Activated T-helper 1 cell treated with anti-CD3 and anti-CD28 coated beads, Interleukin-12 subunit alpha, Interleukin-12 subunit beta, Interleukin-2, Interleukin-4 antibody, amounts not matched to agents 30 ng/mL and 10 ng/mL and 1 ng/mL, durations not matched to agents 14 hours and 24 hours and 36 hours (primary cell): ENCODE measurements at regions of chr1 and their contacts with region 1.

Region 1: DNA sequence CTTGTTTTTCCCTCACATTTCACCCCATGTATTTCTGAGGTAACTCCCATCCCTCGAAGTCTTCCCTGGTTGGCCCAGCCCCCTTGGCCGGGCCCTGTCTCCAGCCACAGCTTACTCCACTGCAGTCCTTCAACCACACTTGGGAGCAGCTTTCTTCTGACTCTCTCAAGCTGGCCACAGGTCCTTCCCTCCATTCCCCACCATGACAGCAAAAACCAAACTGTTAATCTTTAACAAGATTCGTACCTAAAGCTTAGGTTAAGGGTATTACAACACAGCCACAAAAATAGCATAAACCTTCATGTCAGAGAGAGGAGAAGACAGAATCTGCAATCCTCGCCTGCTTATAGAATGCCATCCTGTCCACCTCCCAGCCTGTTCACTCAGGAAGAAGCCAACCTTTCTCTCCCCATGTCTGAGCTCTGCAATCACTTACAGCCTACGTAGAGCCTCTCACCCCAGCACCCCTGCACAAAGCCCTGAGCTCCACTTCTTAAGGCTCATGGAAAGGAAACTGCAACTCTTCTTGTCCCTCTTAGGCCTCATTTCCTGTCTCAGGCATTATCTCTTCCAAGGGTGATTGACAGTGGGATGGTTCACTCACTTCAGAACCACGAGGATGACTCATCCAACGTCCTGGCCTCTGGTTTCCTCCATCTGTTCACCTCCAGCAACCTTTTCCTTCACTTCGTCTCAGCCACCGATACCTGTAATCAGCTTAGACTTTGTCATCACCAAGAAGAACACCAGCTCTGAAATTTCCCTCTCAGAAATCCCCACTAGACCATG is 72.8 kb downstream of the CD2 start:
- DNase-seq: peak; percentile 75
- H3K4me3 Mint-ChIP-seq: peak overlapping the region; percentile 70
- H3K27ac Mint-ChIP-seq: peak overlapping the region; percentile 95
- H3K4me1 Mint-ChIP-seq: peaks cover 74% of the 10 kb centered on the region
- H3K27me3 Mint-ChIP-seq: no peaks in the 10 kb centered on the region

Region 2: GRCh38 chr1:116737020-116737854 is 89.8 kb before region 1 on chr1:
- intact Hi-C with region 1: loop called (anchors 1 kb)
- DNase-seq: peak; percentile 70
- H3K4me3 Mint-ChIP-seq: peak overlapping the region; percentile 66
- H3K27ac Mint-ChIP-seq: peak overlapping the region; percentile 99
- H3K4me1 Mint-ChIP-seq: peaks cover 79% of the 10 kb centered on the region
- H3K27me3 Mint-ChIP-seq: no peaks in the 10 kb centered on the region

Region 3: DNA sequence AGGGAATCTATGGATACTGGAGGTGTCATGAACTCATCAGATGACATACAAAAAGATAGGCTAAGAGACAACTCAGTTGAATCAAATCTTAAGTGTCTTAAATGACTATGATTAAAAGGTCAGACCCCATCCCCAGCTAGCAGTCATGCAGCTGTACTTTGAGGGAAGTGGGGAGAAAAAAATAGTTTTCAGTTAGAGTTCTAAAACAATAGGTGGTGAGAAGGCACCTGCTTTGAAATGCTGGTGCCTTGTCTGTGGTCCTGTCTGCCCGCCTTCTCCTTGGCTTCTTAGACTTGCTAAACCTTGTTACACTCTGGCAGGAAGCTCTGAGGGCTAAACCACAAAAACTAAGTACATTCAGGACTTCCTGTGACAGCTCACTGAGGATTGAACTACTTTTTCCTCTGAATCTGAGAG is 57.4 kb before region 1 on chr1:
- intact Hi-C with region 1: loop called (anchors 1 kb)
- DNase-seq: peak; percentile 77
- H3K4me3 Mint-ChIP-seq: peak overlapping the region; percentile 84
- H3K27ac Mint-ChIP-seq: peak overlapping the region; percentile 100
- H3K4me1 Mint-ChIP-seq: peaks cover 90% of the 10 kb centered on the region
- H3K27me3 Mint-ChIP-seq: peaks cover under 1% of the 10 kb centered on the region

Region 4: GRCh38 chr1:116853670-116854402 is 26.8 kb after region 1 on chr1:
- intact Hi-C with region 1: loop called (anchors 1 kb)
- DNase-seq: no peak
- H3K4me3 Mint-ChIP-seq: no peak overlapping the region
- H3K27ac Mint-ChIP-seq: peak overlapping the region; percentile 53
- H3K4me1 Mint-ChIP-seq: peaks cover 34% of the 10 kb centered on the region
- H3K27me3 Mint-ChIP-seq: no peaks in the 10 kb centered on the region

Region 5: DNA sequence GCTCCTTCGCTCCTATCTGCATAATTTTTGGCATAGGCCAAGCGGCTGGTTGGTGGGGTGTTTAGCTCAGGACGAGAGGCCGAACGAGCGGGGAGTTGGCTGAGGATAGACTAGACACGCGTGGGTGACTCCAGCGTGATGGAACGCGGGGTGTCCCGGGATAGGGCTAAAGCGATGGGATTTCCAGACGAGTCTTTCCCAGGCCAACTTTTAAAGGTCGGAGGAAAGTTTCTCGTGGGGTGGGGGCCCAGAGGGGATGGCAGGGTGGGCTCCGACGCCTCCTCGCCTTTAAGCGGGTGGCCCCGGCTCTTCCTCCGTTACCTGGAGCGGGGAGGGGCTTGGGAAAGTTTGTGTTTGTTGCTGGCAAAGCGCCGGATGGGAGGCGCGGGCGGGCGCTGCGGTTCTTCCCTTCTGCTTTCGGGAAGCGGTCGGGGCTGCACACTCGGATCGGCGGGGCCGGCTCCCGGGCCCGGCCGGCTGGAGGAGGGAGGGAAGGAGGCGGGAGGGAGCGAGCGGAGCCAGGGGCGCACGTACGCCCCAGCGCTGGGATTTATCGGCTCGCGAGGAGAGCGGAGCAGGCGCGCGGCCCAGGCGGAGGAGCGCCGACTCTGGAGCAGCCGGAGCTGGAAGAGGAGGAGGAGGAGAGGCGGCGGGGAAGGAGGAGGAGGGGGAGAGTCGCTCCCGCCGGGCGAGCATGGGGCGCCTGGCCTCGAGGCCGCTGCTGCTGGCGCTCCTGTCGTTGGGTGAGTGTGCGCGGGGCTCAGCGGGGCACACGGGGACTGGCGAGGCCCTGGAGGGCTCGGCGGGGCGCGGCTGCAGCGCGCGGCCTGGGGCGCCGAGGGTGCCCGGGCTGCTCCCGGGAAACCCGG is 82.7 kb after region 1 on chr1 and contains the start of gene PTGFRN:
- intact Hi-C with region 1: loop called (anchors 5 kb)
- DNase-seq: no peak
- H3K4me3 Mint-ChIP-seq: peak within 1 kb of the TSS; percentile 87
- H3K27ac Mint-ChIP-seq: peak within 1 kb of the TSS; percentile 75
- H3K4me1 Mint-ChIP-seq: peaks cover 9% of the 10 kb centered on the region
- H3K27me3 Mint-ChIP-seq: peaks cover 4% of the 10 kb centered on the region
- total RNA-seq, gene PTGFRN: 38.0 and 43.4 TPM in 2 replicates

Region 6: DNA sequence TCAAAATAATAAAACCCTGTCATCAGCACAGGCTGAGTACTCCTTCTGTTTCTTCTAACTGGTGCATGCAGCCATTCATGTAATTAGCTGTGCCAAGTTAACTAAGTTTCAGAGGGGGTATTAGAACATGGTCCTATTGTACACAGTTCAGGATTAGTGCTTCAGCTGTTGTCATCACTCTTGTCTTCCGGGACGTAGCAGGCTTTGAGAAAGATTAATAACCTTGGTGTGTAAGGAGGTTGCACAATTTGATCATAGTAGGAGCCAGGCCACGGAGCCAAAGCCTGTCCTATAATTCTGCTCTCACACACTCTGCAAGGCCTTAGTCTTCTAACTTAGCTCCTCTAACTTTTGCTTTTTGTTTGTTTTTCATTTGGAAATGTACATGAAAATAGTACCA is 127.4 kb after region 1 on chr1:
- intact Hi-C with region 1: no loop called
- DNase-seq: no peak
- H3K4me3 Mint-ChIP-seq: no peak overlapping the region
- H3K27ac Mint-ChIP-seq: no peak overlapping the region
- H3K4me1 Mint-ChIP-seq: no peaks in the 10 kb centered on the region
- H3K27me3 Mint-ChIP-seq: no peaks in the 10 kb centered on the region

Region 7: GRCh38 chr1:117001254-117001927 is 174.4 kb after region 1 on chr1 and contains the start of gene CD101:
- intact Hi-C with region 1: loop called (anchors 1 kb)
- DNase-seq: no peak
- H3K4me3 Mint-ChIP-seq: peak within 1 kb of the TSS; percentile 3
- H3K27ac Mint-ChIP-seq: peak within 1 kb of the TSS; percentile 79
- H3K4me1 Mint-ChIP-seq: peaks cover 36% of the 10 kb centered on the region
- H3K27me3 Mint-ChIP-seq: peaks cover 3% of the 10 kb centered on the region
- total RNA-seq, gene CD101: 0.80 and 1.0 TPM in 2 replicates